Activated CD4-positive, alpha-beta T cell treated with anti-CD3 and anti-CD28 coated beads, Interleukin-2, amount 10 ng/mL, durations not matched to agents 24 days and 14 days (primary cell): ENCODE measurements at regions of chr4 and their contacts with region 1.

Region 1: GRCh38 chr4:68319040-68319439 is 30.9 kb downstream of the YTHDC1 start:
- DNase-seq: no peak
- H3K4me3 Mint-ChIP-seq: no peak overlapping the region
- H3K27ac Mint-ChIP-seq: peak overlapping the region; percentile 19
- H3K4me1 Mint-ChIP-seq: peaks cover 11% of the 10 kb centered on the region
- H3K27me3 Mint-ChIP-seq: no peaks in the 10 kb centered on the region

Region 2: GRCh38 chr4:68338608-68339007 is 19.6 kb after region 1 on chr4:
- intact Hi-C with region 1: loop called (anchors 2 kb)
- DNase-seq: no peak
- H3K4me3 Mint-ChIP-seq: no peak overlapping the region
- H3K27ac Mint-ChIP-seq: no peak overlapping the region
- H3K4me1 Mint-ChIP-seq: peaks cover 23% of the 10 kb centered on the region
- H3K27me3 Mint-ChIP-seq: no peaks in the 10 kb centered on the region

Region 3: GRCh38 chr4:68929076-68929736 is 610.2 kb after region 1 on chr4:
- intact Hi-C with region 1: no loop called
- DNase-seq: no peak
- H3K4me3 Mint-ChIP-seq: no peak overlapping the region
- H3K27ac Mint-ChIP-seq: no peak overlapping the region
- H3K4me1 Mint-ChIP-seq: no peaks in the 10 kb centered on the region
- H3K27me3 Mint-ChIP-seq: no peaks in the 10 kb centered on the region